MCF 10A (cell line): ENCODE measurements at regions of chr3 and their contacts with region 1.

Region 1: DNA sequence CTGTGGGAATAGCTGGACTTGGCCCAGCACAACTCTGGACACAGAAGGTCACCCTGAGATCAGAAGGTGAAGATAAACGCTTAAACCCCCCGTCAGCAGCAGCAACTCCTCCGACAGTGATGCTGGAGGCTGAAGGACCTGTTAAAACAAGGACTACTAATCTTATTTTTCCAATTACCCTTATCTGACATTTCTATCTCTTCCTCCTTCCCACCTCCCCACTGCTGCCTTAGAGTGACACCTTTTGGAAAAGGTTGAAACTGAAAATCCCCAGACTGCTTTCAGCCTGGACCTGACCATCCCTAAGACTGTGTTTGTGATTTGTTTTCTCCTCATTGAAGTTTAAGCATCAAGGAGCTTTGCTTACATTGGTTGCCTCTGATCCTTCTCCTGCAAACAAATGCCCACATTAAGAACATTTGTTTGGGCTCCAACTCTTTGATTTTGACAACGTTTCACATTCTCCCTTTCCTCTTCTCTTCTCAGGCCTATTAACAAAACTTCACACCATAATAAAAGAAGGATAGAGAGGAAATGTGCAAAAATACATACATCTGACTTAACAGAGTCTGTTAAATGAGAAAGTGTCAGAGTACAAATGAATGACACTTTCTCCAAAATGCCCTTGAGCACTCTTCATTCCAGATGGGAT is 410.6 kb upstream of the WNT5A start:
- DNase-seq: peak; percentile 60
- H3K4me3 Mint-ChIP-seq: no peak overlapping the region
- H3K27ac Mint-ChIP-seq: no peak overlapping the region
- H3K4me1 Mint-ChIP-seq: peaks cover 7% of the 10 kb centered on the region
- H3K27me3 Mint-ChIP-seq: no peaks in the 10 kb centered on the region
- CTCF ChIP-seq: peak; percentile 77

Region 2: GRCh38 chr3:54870423-54870822 is 1027.3 kb before region 1 on chr3:
- CTCF ChIA-PET with region 1: no interaction called
- POLR2A ChIA-PET with region 1: no interaction called
- intact Hi-C with region 1: loop called (anchors 5 kb)
- DNase-seq: peak; percentile 77
- H3K4me3 Mint-ChIP-seq: no peak overlapping the region
- H3K27ac Mint-ChIP-seq: no peak overlapping the region
- H3K4me1 Mint-ChIP-seq: peaks cover 41% of the 10 kb centered on the region
- H3K27me3 Mint-ChIP-seq: no peaks in the 10 kb centered on the region
- CTCF ChIP-seq: peak; percentile 69

Region 3: GRCh38 chr3:55042591-55042990 is 855.1 kb before region 1 on chr3:
- CTCF ChIA-PET with region 1: no interaction called
- POLR2A ChIA-PET with region 1: no interaction called
- intact Hi-C with region 1: loop called (anchors 2 kb)
- DNase-seq: peak; percentile 26
- H3K4me3 Mint-ChIP-seq: no peak overlapping the region
- H3K27ac Mint-ChIP-seq: no peak overlapping the region
- H3K4me1 Mint-ChIP-seq: no peaks in the 10 kb centered on the region
- H3K27me3 Mint-ChIP-seq: no peaks in the 10 kb centered on the region
- CTCF ChIP-seq: peak; percentile 30

Region 4: GRCh38 chr3:55485211-55485791 is 412.4 kb before region 1 on chr3:
- CTCF ChIA-PET with region 1: interaction called, 8 read pairs
- POLR2A ChIA-PET with region 1: no interaction called
- intact Hi-C with region 1: loop called (anchors 1 kb)
- DNase-seq: peak; percentile 81
- H3K4me3 Mint-ChIP-seq: peak overlapping the region; percentile 97
- H3K27ac Mint-ChIP-seq: peak overlapping the region; percentile 79
- H3K4me1 Mint-ChIP-seq: peaks cover 22% of the 10 kb centered on the region
- H3K27me3 Mint-ChIP-seq: no peaks in the 10 kb centered on the region
- CTCF ChIP-seq: peak; percentile 63

Region 5: DNA sequence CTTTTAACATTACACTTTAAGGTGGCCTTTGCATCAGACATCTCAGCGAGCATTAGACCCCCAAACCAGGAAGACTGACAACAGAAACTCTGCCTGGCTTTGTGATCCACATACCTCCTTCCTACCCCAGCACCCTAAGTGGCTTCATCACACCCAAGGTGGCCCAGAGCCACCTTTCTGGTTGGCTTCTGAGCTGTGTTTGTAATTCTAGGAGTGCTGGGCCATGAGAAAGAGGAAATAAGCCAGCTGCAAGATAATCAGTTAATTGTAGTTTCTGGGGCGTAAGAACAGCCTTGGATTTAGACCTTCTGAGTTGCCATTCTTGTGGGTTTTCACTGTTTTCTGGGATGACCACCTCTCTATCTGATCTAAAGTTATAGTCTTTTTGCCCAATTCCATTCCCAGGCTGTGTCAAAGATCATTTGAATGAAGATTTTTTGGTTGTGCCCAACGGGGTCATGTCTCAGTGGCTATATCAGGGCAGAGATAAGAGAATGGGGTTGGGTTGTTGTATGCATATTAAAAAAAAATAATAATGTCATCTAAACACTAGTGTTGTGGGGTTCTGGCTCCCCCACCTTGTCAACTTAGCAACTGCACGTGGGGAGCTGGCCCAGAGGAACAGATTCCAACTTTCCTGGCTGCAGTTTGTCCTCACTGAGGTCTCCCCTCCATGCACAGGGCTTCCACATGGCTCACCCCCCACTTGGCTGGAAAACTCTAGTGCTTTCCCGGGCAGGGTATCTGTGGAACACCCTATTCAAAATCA is 175.8 kb before region 1 on chr3:
- CTCF ChIA-PET with region 1: interaction called, 6 read pairs
- POLR2A ChIA-PET with region 1: no interaction called
- intact Hi-C with region 1: loop called (anchors 2 kb)
- DNase-seq: peak; percentile 45
- H3K4me3 Mint-ChIP-seq: no peak overlapping the region
- H3K27ac Mint-ChIP-seq: no peak overlapping the region
- H3K4me1 Mint-ChIP-seq: no peaks in the 10 kb centered on the region
- H3K27me3 Mint-ChIP-seq: peaks cover 27% of the 10 kb centered on the region
- CTCF ChIP-seq: peak; percentile 60

Region 6: GRCh38 chr3:55818485-55818884 is 79.2 kb before region 1 on chr3:
- CTCF ChIA-PET with region 1: no interaction called
- POLR2A ChIA-PET with region 1: no interaction called
- intact Hi-C with region 1: loop called (anchors 2 kb)
- DNase-seq: peak; percentile 20
- H3K4me3 Mint-ChIP-seq: no peak overlapping the region
- H3K27ac Mint-ChIP-seq: no peak overlapping the region
- H3K4me1 Mint-ChIP-seq: peaks cover 5% of the 10 kb centered on the region
- H3K27me3 Mint-ChIP-seq: no peaks in the 10 kb centered on the region
- CTCF ChIP-seq: no peak

Region 7: DNA sequence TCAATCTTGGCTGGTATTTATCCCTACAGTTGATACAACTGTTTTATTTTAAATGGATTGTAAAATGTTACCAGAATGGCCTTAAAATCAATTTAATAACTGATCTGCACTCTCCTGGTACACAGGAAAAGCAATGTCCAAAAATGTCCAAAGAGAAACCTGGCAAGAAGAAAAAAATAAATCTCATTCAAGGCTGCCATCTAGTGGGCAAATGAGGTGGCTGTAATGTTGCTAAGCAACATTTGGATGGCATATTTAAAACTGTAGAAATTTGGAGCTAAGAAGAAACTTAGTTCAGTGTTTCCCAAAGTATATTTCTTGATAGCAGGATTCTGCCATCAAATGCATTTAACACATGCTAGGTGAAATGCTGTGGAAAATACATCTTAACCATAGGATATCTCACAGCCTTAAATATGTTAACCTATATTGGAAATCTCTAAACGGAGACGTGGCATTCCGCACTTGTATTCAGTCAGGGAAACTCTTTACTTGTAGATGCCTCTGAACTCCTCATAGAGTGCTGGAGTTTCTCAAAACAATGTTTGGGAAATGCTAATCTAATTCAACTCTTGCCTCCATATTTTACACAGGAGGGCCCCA is 353.7 kb after region 1 on chr3:
- CTCF ChIA-PET with region 1: interaction called, 13 read pairs
- POLR2A ChIA-PET with region 1: no interaction called
- intact Hi-C with region 1: loop called (anchors 2 kb)
- DNase-seq: peak; percentile 75
- H3K4me3 Mint-ChIP-seq: no peak overlapping the region
- H3K27ac Mint-ChIP-seq: no peak overlapping the region
- H3K4me1 Mint-ChIP-seq: no peaks in the 10 kb centered on the region
- H3K27me3 Mint-ChIP-seq: no peaks in the 10 kb centered on the region
- CTCF ChIP-seq: peak; percentile 62

Region 8: DNA sequence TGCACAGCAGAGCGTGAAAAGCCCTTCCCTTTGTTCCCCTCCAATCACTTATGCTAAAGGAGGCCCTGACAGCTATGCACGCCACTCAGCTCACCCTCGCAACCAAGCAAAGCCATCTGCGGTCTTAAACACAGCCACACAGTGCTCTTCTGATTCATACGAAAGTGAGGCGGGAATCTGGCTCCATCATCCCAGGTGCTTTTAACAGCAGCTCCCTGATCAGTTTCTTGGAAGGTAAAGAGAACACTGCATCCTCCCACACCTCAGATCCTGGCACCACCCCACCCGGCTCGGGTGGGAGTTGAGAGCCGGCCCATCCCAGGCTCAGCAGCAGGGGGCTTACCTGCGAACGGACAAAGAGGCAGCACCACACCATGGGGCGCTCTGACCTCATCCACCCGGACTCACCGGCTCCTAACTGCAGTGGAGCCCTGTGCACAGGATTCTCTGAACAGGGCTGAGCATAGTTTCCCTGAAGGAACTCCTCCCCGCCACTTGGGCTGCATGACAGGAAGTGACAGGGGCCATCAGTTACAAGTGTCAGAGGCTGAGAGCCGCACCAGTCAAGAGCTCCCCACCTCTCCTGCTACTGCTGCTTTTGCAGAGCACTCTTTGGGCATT is 1018.4 kb after region 1 on chr3:
- CTCF ChIA-PET with region 1: no interaction called
- POLR2A ChIA-PET with region 1: no interaction called
- intact Hi-C with region 1: no loop called
- DNase-seq: no peak
- H3K4me3 Mint-ChIP-seq: no peak overlapping the region
- H3K27ac Mint-ChIP-seq: no peak overlapping the region
- H3K4me1 Mint-ChIP-seq: no peaks in the 10 kb centered on the region
- H3K27me3 Mint-ChIP-seq: no peaks in the 10 kb centered on the region
- CTCF ChIP-seq: no peak